Activated CD4-positive, alpha-beta T cell treated with anti-CD3 and anti-CD28 coated beads for 36 hours (primary cell): ENCODE measurements at regions of chr20 and their contacts with region 1.

Region 1: GRCh38 chr20:33992923-33993575 is 662 bp upstream of the RALY start:
- DNase-seq: peak; percentile 100
- ATAC-seq: peak; percentile 87
- H3K4me3 Mint-ChIP-seq: peak overlapping the region; percentile 97
- H3K27ac Mint-ChIP-seq: peak overlapping the region; percentile 97
- H3K4me1 Mint-ChIP-seq: peaks cover 50% of the 10 kb centered on the region
- H3K27me3 Mint-ChIP-seq: no peaks in the 10 kb centered on the region

Region 2: DNA sequence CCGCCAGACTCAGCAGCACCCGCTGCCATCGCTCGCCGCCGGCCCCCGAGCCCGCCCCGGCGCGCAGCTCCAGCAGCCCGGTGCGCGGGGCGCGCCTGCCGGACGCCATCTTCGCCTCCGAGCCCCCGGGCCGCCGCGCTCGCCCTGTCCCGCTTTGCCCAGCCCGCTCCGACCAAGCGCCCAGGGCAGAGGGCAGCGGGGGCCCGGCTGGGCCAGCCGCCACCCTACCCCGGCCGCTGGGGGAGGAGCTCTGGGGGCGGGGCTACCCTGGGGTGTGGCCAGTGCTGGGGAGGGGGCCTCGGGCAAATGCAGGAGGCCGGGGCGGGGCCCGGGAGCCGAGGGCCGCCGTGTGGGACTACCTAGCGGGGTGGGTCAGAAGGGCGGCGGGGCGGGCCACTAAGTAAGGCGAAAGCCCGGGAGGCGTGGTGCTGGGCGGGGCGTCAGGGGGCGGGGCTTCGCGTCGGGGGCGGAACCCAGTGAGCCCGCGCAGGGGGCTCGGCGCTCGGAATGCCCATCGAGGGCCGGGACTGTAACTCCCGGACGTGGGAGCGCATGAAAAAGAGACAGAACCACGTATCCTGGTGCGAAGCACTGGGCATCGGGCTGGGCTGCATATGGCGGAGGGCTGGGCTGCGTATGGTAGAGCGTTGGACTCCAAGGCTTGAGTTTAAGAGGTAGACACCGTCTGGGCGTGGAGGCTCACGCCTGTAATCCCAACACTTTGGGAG is 549.4 kb before region 1 on chr20 and contains the start of gene SNTA1:
- CTCF ChIA-PET with region 1: no interaction called
- POLR2A ChIA-PET with region 1: no interaction called
- intact Hi-C with region 1: loop called (anchors 1 to 5 kb)
- DNase-seq: peak; percentile 95
- ATAC-seq: peak; percentile 92
- H3K4me3 Mint-ChIP-seq: peak within 1 kb of the TSS; percentile 83
- H3K27ac Mint-ChIP-seq: peak within 1 kb of the TSS; percentile 78
- H3K4me1 Mint-ChIP-seq: peaks cover 15% of the 10 kb centered on the region
- H3K27me3 Mint-ChIP-seq: no peaks in the 10 kb centered on the region
- total RNA-seq, gene SNTA1: 4.2 to 5.0 TPM

Region 3: GRCh38 chr20:33719989-33720709 is 272.9 kb before region 1 on chr20 and contains the start of gene PXMP4:
- CTCF ChIA-PET with region 1: no interaction called
- POLR2A ChIA-PET with region 1: interaction called, 5 read pairs
- intact Hi-C with region 1: loop called in 1 of 2 experiments (anchors 1 kb)
- DNase-seq: peak; percentile 92
- ATAC-seq: peak; percentile 99
- H3K4me3 Mint-ChIP-seq: peak within 1 kb of the TSS; percentile 88
- H3K27ac Mint-ChIP-seq: peak within 1 kb of the TSS; percentile 83
- H3K4me1 Mint-ChIP-seq: peaks cover 18% of the 10 kb centered on the region
- H3K27me3 Mint-ChIP-seq: no peaks in the 10 kb centered on the region
- total RNA-seq, gene PXMP4: 8.8 to 10.2 TPM

Region 4: DNA sequence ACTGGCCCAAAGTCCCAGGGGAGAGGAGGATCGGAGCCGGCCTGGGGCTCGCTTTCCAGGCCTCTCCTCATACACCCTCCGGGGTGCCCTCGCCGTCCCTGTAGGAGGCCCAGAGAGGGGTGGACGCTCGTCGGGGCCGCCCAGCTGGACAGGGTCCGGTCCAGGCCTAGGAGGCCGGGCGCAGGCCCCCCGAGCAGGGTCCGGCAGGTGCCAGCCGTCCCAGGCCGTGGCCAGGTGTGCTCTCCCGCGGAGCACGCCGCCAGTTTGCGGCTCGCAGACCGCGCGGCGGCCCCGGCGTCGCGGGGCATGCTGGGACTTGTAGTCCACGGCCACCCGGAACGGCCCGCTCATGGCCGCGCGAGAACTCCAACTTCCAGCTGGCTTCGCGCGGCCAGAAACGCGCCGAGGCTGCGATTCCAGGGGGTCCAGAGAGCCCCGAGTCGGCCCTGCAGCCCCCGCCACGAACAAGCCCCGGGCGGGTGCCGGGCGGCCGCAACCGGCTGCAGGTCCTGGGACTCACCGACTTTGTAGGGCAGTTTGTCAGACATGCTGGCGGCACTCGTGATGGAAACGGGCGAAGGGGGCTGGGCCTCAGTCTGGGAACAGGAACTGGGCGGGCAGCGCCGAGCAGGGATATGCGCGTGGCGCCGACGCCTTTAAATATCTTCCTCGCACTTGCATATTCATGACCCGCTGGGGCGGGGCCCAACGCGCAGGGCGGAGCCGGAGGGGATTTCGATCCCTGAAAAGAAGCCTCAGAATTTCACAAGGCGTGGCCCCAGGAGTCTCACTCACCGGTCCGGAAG is 309.9 kb after region 1 on chr20 and contains the start of gene AHCY:
- CTCF ChIA-PET with region 1: no interaction called
- POLR2A ChIA-PET with region 1: no interaction called
- intact Hi-C with region 1: loop called in 1 of 2 experiments (anchors 1 kb)
- DNase-seq: peak; percentile 97
- ATAC-seq: peak; percentile 96
- H3K4me3 Mint-ChIP-seq: peak within 1 kb of the TSS; percentile 90
- H3K27ac Mint-ChIP-seq: peak within 1 kb of the TSS; percentile 91
- H3K4me1 Mint-ChIP-seq: peaks cover 18% of the 10 kb centered on the region
- H3K27me3 Mint-ChIP-seq: no peaks in the 10 kb centered on the region
- total RNA-seq, gene AHCY: 183 to 189 TPM

Region 5: DNA sequence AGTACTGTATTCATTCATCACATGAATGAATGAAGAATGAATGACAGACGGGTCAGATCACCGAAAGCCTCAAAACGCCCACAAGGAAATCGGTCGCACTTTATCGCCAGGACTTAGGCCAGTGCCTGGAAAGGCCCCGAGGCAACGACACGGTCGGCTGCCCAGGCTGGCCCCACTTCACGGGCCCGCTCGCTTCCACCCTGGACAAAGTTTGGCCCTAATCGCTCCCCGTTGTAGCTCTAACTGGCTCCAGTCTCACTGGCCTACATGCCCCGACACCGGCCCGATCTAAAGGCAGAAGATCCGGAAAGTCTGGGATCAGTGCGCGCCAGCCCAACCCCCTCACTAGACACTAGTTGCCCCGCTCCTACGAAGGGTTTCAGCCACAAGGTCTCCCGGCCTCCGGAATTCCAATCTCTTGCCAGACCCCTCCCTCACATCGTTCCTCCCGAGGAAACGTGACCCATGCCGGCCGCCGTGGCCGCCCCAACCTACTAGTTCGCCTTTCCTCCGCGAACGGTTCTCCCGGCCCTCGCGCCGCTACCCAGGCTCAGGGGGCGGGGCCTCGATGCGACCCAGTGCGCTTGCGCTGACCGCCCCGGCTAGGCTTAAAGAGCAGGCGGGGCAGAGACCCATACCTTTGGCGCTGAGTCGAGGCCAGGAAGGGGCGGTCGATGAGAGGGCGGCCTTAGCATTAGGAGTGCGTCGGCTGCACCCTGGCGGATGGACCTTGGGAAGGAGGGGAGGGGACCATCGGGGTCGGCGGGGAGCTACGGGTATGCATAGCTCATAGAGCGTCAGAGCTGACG is 962.4 kb after region 1 on chr20 and contains the starts of genes GSS and MYH7B:
- CTCF ChIA-PET with region 1: no interaction called
- POLR2A ChIA-PET with region 1: no interaction called
- intact Hi-C with region 1: loop called in 1 of 2 experiments (anchors 5 kb)
- DNase-seq: peak; percentile 99
- ATAC-seq: peak; percentile 95
- H3K4me3 Mint-ChIP-seq: peak within 1 kb of the TSS; percentile 98
- H3K27ac Mint-ChIP-seq: peak within 1 kb of the TSS; percentile 94
- H3K4me1 Mint-ChIP-seq: peaks cover 16% of the 10 kb centered on the region
- H3K27me3 Mint-ChIP-seq: no peaks in the 10 kb centered on the region
- total RNA-seq, gene GSS: 58.7 to 59.5 TPM
- total RNA-seq, gene MYH7B: 0.23 to 0.40 TPM

Region 6: DNA sequence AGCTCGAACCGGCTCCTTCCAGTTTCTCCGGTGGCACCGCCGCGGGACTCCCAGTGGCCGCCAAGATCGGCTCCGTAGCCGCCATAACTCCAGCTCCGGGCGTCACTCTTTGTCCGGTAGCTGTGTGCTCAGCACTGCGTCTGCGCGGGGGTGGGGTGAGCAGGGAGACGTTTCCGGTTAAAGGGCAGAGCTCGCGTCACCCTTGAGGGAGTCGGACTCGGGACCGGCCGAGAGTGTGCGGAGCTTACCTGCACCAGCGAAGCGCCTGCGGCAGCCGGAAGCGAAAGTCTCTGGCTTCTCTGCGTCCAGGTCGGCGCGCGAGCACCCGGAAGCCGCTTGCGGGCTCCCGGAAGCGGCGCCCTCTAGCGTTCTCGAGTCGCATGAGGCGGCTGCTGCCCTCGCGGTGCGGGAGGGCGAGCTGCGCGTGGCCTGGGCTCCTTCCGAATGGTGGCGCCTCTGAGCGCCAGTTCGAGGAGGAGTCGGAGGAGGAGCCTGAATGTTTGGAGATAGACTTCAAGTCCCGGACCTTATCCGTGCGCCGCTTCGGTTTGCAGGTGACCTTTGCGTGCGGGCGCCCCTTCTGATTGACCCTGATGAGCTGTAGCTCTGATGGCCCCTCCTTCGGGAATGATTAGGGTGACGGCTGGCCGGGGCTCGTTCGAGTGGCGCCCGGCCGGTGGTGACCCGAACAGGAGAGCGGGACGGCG is 1961.3 kb after region 1 on chr20 and contains the start of gene SCAND1:
- CTCF ChIA-PET with region 1: no interaction called
- POLR2A ChIA-PET with region 1: no interaction called
- intact Hi-C with region 1: loop called in 1 of 2 experiments (anchors 2 kb)
- DNase-seq: peak; percentile 99
- ATAC-seq: peak; percentile 91
- H3K4me3 Mint-ChIP-seq: peak within 1 kb of the TSS; percentile 97
- H3K27ac Mint-ChIP-seq: peak within 1 kb of the TSS; percentile 100
- H3K4me1 Mint-ChIP-seq: peaks cover 11% of the 10 kb centered on the region
- H3K27me3 Mint-ChIP-seq: no peaks in the 10 kb centered on the region
- total RNA-seq, gene SCAND1: 37.8 to 39.3 TPM